CD14-positive monocyte (primary cell): ENCODE measurements at regions of chr17 and their contacts with region 1.

Region 1: DNA sequence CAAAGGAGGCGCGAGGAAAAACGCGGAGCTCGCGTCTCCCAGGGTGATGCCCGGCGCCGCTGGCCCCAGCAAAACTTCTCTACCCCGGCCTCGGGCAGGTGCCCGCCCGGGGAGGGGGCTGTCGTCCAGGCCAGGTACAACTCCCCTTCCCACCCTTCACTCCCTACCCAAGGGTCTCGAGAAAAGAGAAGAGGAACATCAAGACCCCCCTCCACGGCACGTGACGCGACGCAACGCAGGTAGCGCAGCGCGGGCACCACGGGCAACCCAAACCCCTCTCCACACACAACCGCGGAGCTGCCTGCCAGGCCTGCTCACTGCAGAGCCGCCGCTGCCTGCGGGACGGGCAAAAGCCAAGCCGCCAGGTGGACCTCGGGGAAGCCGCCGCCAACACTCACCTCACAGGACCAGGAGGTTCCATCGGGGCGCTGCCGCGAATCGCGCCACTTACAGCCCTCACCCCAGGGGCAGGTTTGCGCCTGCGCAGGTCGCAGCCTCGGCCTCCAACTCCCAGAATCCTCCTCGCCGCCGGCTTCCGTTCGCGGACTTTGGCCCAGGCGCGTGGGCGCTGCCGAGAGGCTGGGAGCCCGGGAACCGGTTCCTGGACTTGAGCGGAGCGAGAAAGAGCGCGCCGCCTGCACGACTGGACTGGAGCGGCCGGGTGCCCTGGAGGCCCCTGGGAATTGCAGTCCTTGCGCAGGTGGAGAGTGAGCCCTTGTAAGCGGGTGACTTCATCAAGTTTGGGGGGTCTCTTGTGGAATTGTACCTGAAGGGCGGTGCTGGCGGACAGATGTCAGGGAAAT is at the start of gene ZNF232:
- DNase-seq: peak; percentile 84 to 87 (median 85)
- H3K4me3 ChIP-seq: peak within 1 kb of the TSS; percentile 57 to 94 (median 90)
- H3K4me3 Mint-ChIP-seq: peak within 1 kb of the TSS; percentile 90 to 94
- H3K27ac ChIP-seq: peak within 1 kb of the TSS in 1 of 2 donors; percentile 39
- H3K27ac Mint-ChIP-seq: peak within 1 kb of the TSS; percentile 22 to 78 (median 66)
- H3K4me1 ChIP-seq: peaks cover 14 to 28% of the 10 kb centered on the region in 2 donors
- H3K4me1 Mint-ChIP-seq: peaks cover 22% of the 10 kb centered on the region
- H3K27me3 ChIP-seq: peaks cover 11 to 20% of the 10 kb centered on the region in 2 donors
- H3K27me3 Mint-ChIP-seq: peaks cover 18 to 26% (median 25%) of the 10 kb centered on the region in 3 donors
- CTCF ChIP-seq: no peak
- polyA plus RNA-seq, gene ZNF232: 2.2 to 3.1 (median 3.0) TPM

Region 2: GRCh38 chr17:5078106-5079028 is 33.2 kb before region 1 on chr17 and contains the start of gene ZFP3:
- intact Hi-C with region 1: loop called in 1 of 2 experiments (anchors 2 kb)
- DNase-seq: peak; percentile 71 to 75 (median 72)
- H3K4me3 ChIP-seq: peak within 1 kb of the TSS; percentile 49 to 86 (median 82)
- H3K4me3 Mint-ChIP-seq: peak within 1 kb of the TSS; percentile 94 to 96
- H3K27ac ChIP-seq: peak within 1 kb of the TSS; percentile 64 to 75
- H3K27ac Mint-ChIP-seq: peak within 1 kb of the TSS; percentile 69 to 96 (median 91)
- H3K4me1 ChIP-seq: peaks cover 16 to 20% of the 10 kb centered on the region in 2 donors
- H3K4me1 Mint-ChIP-seq: peaks cover 17% of the 10 kb centered on the region
- H3K27me3 ChIP-seq: peaks cover 0 to 3% of the 10 kb centered on the region in 2 donors
- H3K27me3 Mint-ChIP-seq: peaks cover 5 to 15% (median 13%) of the 10 kb centered on the region in 3 donors
- CTCF ChIP-seq: no peak
- polyA plus RNA-seq, gene ZFP3: 0.39 to 1.9 (median 0.75) TPM

Region 3: DNA sequence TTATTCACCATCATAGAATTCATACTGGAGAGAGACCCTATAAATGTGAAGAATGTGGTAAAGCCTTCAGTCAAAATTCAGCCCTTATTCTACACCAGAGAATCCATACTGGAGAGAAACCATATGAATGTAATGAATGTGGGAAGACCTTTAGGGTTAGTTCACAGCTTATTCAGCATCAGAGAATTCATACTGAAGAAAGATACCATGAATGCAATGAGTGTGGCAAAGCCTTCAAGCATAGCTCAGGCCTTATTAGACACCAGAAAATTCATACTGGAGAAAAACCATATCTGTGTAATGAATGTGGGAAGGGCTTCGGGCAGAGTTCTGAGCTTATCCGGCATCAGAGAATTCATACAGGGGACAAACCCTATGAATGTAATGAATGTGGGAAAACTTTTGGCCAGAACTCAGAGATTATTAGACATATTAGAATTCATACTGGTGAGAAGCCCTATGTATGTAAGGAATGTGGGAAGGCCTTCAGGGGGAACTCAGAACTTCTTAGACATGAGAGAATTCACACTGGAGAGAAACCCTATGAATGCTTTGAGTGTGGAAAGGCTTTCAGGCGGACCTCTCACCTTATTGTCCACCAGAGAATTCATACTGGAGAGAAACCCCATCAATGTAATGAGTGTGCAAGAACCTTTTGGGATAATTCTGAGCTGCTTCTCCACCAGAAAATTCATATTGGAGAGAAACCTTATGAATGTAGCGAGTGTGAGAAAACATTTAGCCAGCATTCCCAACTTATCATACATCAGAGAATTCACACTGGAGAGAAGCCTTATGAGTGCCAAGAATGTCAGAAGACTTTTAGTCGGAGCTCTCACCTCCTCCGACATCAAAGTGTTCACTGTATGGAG is 19.2 kb before region 1 on chr17:
- intact Hi-C with region 1: no loop called
- DNase-seq: no peak
- H3K4me3 ChIP-seq: peak overlapping the region in 1 of 3 experiments; percentile 22
- H3K4me3 Mint-ChIP-seq: no peak overlapping the region
- H3K27ac ChIP-seq: no peak overlapping the region
- H3K27ac Mint-ChIP-seq: no peak overlapping the region
- H3K4me1 ChIP-seq: peaks cover 12% of the 10 kb centered on the region in 2 donors
- H3K4me1 Mint-ChIP-seq: peaks cover 12% of the 10 kb centered on the region
- H3K27me3 ChIP-seq: peaks cover 0 to 4% of the 10 kb centered on the region in 2 donors
- H3K27me3 Mint-ChIP-seq: peaks cover 9 to 19% (median 9%) of the 10 kb centered on the region in 3 donors
- CTCF ChIP-seq: no peak

Region 4: GRCh38 chr17:5131146-5131715 is 19.6 kb after region 1 on chr17:
- intact Hi-C with region 1: no loop called
- DNase-seq: no peak
- H3K4me3 ChIP-seq: no peak overlapping the region
- H3K4me3 Mint-ChIP-seq: no peak overlapping the region
- H3K27ac ChIP-seq: no peak overlapping the region
- H3K27ac Mint-ChIP-seq: peak overlapping the region in 1 of 7 donors; percentile 53
- H3K4me1 ChIP-seq: no peaks in the 10 kb centered on the region
- H3K4me1 Mint-ChIP-seq: no peaks in the 10 kb centered on the region
- H3K27me3 ChIP-seq: no peaks in the 10 kb centered on the region
- H3K27me3 Mint-ChIP-seq: peaks cover 2 to 6% (median 4%) of the 10 kb centered on the region in 3 donors
- CTCF ChIP-seq: no peak

Region 5: DNA sequence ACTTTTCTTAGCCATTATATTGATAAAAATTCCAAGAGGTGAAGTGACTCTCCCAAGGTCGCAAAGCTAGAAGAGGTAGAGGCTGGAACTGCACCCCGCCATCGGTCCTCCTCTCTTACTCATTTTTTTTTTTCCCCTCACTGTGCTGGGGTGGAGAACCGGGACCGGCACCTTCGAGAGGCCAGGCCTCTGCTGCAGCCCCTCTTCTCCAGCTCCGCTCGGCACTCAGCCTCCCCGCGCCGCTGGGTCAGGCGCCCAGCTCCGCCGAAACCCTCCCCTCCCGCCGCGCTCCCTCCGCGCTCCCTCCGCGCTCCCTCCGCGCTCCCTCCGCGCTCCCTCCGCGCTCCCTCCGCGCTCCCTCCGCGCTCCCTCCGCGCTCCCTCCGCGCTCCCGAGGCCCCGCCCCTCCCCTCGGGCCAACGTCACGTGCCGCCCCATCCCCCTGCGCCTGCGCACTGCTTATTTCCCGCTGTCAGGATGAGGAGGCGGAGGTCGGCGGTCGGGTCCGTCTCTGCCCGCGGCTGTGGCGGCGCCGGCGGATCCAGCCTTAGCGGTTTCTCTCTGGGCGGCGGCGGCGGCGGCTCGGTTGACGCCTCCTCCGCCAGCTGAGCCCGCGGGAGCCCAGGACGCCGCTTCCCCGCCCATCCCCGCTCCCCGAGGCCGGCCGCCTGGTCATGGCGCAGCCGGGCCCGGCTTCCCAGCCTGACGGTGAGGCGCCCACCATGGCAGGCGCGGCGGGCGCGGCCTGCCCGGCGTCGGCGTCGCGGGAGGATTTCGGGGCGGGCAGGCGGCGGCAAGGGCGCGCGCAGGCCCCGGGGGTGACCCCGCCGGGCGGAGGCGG is 170.4 kb after region 1 on chr17 and contains the start of gene RABEP1:
- intact Hi-C with region 1: loop called in 1 of 2 experiments (anchors 5 kb)
- DNase-seq: peak; percentile 88 to 90 (median 89)
- H3K4me3 ChIP-seq: peak within 1 kb of the TSS; percentile 62 to 85 (median 75)
- H3K4me3 Mint-ChIP-seq: peak within 1 kb of the TSS; percentile 86 to 89
- H3K27ac ChIP-seq: peak within 1 kb of the TSS in 1 of 2 donors; percentile 68
- H3K27ac Mint-ChIP-seq: peak within 1 kb of the TSS; percentile 75 to 95 (median 88)
- H3K4me1 ChIP-seq: peaks cover 24 to 30% of the 10 kb centered on the region in 2 donors
- H3K4me1 Mint-ChIP-seq: peaks cover 32% of the 10 kb centered on the region
- H3K27me3 ChIP-seq: no peaks in the 10 kb centered on the region
- H3K27me3 Mint-ChIP-seq: peaks cover 0 to 1% (median 0%) of the 10 kb centered on the region in 3 donors
- CTCF ChIP-seq: no peak
- polyA plus RNA-seq, gene RABEP1: 12.7 to 19.1 (median 13.7) TPM